Activated CD4-positive, alpha-beta T cell treated with anti-CD3 and anti-CD28 coated beads, Interleukin-2, amount 10 ng/mL, durations not matched to agents 7 days and 5 days (primary cell): ENCODE measurements at regions of chr18 and their contacts with region 1.

Region 1: GRCh38 chr18:74353169-74353775 is 37.6 kb downstream of the C18orf63 start:
- DNase-seq: peak; percentile 75
- H3K4me3 Mint-ChIP-seq: no peak overlapping the region
- H3K27ac Mint-ChIP-seq: no peak overlapping the region
- H3K4me1 Mint-ChIP-seq: peaks cover 30% of the 10 kb centered on the region
- H3K27me3 Mint-ChIP-seq: peaks cover 9% of the 10 kb centered on the region

Region 2: GRCh38 chr18:74291771-74292540 is 61.3 kb before region 1 on chr18 and contains the start of gene CYB5A:
- CTCF ChIA-PET with region 1: no interaction called
- POLR2A ChIA-PET with region 1: no interaction called
- DNase-seq: peak; percentile 98
- H3K4me3 Mint-ChIP-seq: peak within 1 kb of the TSS; percentile 84
- H3K27ac Mint-ChIP-seq: peak within 1 kb of the TSS; percentile 75
- H3K4me1 Mint-ChIP-seq: peaks cover 9% of the 10 kb centered on the region
- H3K27me3 Mint-ChIP-seq: no peaks in the 10 kb centered on the region
- total RNA-seq, gene CYB5A: 30.6 to 32.3 TPM

Region 3: DNA sequence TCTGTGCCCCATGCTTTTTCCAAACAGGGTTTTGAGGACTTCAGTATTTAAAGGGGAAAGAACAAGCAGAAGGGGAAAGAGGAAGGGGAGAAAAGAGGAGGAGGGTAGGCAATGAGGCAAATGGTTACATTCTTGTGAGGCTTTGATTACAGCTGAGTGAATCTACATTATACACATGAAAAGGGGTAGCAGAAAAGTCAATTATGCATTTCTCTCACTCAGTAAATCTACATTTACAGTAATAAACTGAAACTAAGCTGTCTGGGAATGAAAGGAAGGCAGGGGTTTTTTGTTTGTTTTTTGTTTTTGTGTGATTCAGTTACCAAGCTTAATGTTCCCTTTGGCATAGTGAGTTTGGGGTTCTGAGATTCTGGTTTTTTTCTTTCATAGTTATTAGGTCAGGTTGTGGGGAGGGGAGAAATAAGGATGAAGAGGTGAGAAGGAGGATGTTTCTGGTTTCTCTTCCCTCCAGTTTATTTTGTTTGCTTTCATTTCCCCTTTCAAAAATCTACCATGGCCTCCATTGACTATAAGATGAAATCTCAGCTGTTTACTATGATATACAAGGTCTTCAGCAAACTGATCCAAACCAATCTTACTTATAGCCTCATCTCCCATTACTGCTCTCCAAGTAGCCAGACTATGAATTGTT is 18.9 kb before region 1 on chr18:
- CTCF ChIA-PET with region 1: no interaction called
- POLR2A ChIA-PET with region 1: no interaction called
- DNase-seq: no peak
- H3K4me3 Mint-ChIP-seq: no peak overlapping the region
- H3K27ac Mint-ChIP-seq: no peak overlapping the region
- H3K4me1 Mint-ChIP-seq: peaks cover 3% of the 10 kb centered on the region
- H3K27me3 Mint-ChIP-seq: peaks cover 30% of the 10 kb centered on the region

Region 4: GRCh38 chr18:74493689-74494088 is 140.4 kb after region 1 on chr18:
- CTCF ChIA-PET with region 1: interaction called, 24 read pairs
- POLR2A ChIA-PET with region 1: no interaction called
- DNase-seq: peak; percentile 80
- H3K4me3 Mint-ChIP-seq: no peak overlapping the region
- H3K27ac Mint-ChIP-seq: no peak overlapping the region
- H3K4me1 Mint-ChIP-seq: peaks cover 28% of the 10 kb centered on the region
- H3K27me3 Mint-ChIP-seq: peaks cover 14% of the 10 kb centered on the region